GM13976 (cell line): ENCODE measurements at regions of chr17 and their contacts with region 1.

Region 1: DNA sequence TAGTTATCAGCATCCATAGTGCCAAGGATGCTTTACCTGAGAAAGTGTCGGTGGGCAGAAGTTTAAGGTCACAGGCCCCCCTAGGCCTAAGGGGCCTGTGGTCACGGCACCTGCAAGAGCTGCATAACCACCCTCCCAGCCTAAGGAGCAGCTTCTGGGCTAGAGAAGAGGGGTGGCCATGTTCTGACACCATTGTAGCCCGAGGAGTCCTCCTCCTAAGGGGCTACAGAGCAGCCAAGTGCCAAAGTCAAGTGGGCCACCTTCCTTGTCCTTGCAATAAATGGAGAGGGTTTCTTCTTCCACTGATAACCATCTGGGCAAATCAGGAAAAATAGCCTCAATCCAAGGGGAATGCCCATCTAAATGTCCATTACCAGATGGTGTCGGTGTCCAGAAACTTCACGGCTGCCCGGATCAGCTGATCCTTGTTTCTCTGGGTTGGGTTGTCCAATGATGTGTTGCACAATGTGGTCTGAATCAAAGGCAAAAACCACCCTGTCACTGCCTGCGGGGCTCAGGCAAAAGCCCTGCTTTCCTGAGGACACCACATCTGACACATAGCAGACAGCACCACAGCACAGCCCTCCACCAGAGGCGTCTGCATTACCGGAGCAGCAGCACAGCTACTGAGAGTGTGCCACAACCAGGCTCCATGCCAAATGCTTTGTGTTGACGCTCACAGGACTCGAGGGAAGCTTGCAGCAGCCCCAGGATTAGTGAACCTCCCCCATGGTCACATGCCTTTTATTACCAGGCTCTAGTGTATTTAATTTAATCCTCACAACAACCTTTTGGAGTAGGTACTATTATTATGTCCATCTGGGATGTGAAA is 12.8 kb downstream of the ATPAF2 start:
- DNase-seq: no peak
- CTCF ChIP-seq: no peak

Region 2: GRCh38 chr17:17877529-17878358 is 148.4 kb before region 1 on chr17:
- in situ Hi-C with region 1: loop called (anchors 10 kb)
- DNase-seq: no peak
- CTCF ChIP-seq: no peak